HepG2 (cell line): ENCODE measurements at regions of chr7 and their contacts with region 1.

Region 1: DNA sequence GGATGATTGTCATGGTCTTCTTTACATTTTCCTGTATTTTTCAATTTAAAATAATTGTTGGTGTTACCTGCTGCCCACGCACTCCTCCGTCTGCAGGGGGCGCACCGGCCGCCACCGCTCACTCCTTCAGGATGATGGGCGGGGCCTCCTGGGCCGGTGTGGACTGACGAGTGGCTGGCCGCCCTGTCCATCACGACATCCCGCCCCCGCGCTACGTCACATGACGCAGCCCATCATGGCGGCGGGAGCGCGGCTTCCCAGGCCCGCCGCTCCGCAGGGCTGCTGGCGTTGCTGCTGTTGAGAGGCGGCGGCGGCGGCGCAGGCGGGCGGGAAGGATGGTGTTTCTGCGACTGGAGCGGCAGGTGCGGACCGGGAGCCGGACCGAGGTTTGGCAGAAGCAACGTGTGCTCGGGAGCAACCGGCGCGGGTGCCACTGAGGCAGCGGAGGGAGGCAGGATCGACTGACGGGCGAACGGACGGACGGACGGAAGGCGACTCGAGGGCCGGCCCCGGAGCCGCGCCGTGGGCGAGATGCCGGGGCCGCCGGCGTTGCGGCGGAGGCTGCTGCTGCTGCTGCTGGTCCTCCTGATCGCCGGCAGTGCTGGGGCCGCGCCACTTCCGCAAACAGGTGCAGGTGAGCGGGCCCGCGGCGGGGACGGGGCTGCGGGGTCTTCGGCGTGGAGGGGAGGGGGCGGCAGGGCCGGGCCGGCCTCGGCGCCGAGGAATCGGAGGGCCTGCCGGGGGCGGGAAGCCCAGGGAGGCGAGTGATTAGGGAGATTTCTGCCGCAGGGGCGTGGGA is at the start of gene LMTK2:
- DNase-seq: peak; percentile 81
- ATAC-seq: peak; percentile 92
- H3K4me3 ChIP-seq: peak within 1 kb of the TSS; percentile 91 to 98 (median 96)
- H3K27ac ChIP-seq: peak within 1 kb of the TSS; percentile 71
- H3K4me1 ChIP-seq: peaks cover 62% of the 10 kb centered on the region
- H3K27me3 ChIP-seq: no peaks in the 10 kb centered on the region; a peak in 1 of 5 replicates
- CTCF ChIP-seq: peak; percentile 94
- EP300 ChIP-seq: no peak
- POLR2A ChIP-seq: peak; percentile 71 to 84
- RAD21 ChIP-seq: peak; percentile 81
- total RNA-seq, gene LMTK2: 8.1 and 9.5 TPM in 2 replicates

Region 2: DNA sequence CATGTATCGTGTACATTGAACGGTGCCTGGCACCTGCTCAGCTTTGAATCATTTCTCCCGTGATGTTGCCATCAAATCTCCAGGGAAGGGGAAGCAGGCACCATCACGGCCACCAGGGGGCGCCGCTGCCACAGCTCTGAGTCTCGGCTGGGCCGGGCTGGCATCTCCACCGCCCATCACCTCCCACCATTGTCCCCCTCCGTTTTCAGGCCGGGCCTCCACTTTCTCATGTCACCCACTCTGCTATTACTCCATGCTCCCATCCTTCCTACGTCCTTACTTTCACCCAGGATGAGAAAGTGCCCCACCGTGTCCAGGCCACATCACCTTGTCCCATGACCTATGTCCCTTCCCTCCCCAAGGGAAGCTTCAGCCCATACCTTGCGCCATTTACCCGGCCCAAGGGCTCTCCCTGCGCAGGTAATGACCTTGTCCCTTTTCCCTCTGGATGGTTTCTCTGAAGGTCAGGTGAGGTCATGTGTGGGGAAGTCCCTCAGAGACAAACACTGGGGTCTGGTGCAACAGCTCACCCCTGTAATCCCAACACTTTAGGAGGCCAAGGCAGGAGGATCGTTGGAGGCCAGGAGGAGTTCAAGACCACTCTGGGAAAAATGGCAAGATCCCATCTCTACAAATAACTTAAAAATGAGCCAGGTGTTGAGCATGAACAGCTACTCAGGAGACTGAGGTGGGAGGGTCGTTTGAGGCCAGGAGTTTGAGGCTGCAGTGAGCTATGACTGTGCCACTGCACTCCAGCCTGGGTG is 85.1 kb before region 1 on chr7:
- CTCF ChIA-PET with region 1: no interaction called
- POLR2A ChIA-PET with region 1: no interaction called
- in situ Hi-C with region 1: no loop called
- intact Hi-C with region 1: loop called (anchors 2 kb)
- DNase-seq: peak; percentile 49
- ATAC-seq: peak; percentile 91
- H3K4me3 ChIP-seq: no peak overlapping the region
- H3K27ac ChIP-seq: no peak overlapping the region
- H3K4me1 ChIP-seq: 0 out of 2 replicates have a peak, but pooled peaks cover 5% of the 10 kb centered on the region
- H3K27me3 ChIP-seq: peaks cover 2% of the 10 kb centered on the region in 2 experiments; a peak in 1 of 5 replicates
- CTCF ChIP-seq: peak; percentile 92
- EP300 ChIP-seq: no peak
- POLR2A ChIP-seq: no peak
- RAD21 ChIP-seq: peak; percentile 91

Region 3: DNA sequence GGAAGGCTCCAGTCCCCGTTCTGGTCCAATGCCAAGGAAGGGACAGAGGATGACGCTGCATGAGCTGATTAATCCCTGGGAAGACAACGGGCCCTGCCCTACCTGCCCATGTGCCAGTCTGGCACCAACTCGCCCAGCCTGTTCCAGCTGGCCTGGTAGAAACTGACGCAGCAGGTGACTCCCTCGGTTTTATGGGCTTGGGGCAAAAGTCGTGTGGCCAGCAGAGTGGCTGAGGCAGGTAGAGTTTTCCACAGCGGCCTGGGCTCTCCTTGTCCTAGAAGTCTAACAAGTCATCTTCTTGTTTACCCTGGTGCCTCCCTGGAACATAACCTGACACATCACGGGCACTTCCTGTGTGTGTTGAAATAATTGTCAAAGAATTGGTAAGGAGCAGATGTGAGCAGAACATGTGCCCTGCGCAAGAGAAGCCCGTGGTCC is 20.5 kb before region 1 on chr7:
- CTCF ChIA-PET with region 1: no interaction called
- POLR2A ChIA-PET with region 1: interaction called, 3 read pairs
- in situ Hi-C with region 1: no loop called
- intact Hi-C with region 1: loop called (anchors 2 kb)
- DNase-seq: no peak
- ATAC-seq: peak; percentile 44; the same call in 2 of the 3 replicates
- H3K4me3 ChIP-seq: no peak overlapping the region
- H3K27ac ChIP-seq: no peak overlapping the region
- H3K4me1 ChIP-seq: peaks cover 14% of the 10 kb centered on the region
- H3K27me3 ChIP-seq: no peaks in the 10 kb centered on the region; a peak in 1 of 5 replicates
- CTCF ChIP-seq: no peak
- EP300 ChIP-seq: no peak
- POLR2A ChIP-seq: no peak
- RAD21 ChIP-seq: no peak

Region 4: DNA sequence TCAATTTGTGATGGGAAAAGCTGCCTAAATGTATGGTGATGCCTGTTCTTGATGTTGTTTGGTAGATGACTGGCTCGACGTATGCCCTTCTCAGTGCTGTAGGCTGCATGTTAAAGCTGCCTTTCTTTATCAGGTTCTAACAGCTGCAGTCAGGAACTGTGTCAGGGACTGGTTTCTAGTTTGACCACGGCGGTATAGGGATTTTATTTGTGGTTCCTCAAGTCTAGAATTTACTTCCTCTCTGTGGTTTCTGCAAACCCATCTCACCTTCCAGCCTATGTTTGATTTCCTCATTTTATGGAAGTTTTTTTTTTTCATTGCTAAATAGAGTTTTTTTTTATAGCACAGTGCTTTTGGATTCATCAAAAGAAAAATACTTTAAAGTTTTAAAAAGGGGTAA is 26.3 kb after region 1 on chr7:
- CTCF ChIA-PET with region 1: no interaction called
- POLR2A ChIA-PET with region 1: interaction called, 41 read pairs
- in situ Hi-C with region 1: no loop called
- intact Hi-C with region 1: loop called (anchors 1 kb)
- DNase-seq: no peak
- ATAC-seq: no peak
- H3K4me3 ChIP-seq: peak overlapping the region in 2 of 3 experiments; percentile 53 to 65; a peak in 3 of 6 replicates
- H3K27ac ChIP-seq: peak overlapping the region; percentile 91
- H3K4me1 ChIP-seq: peaks cover 90% of the 10 kb centered on the region
- H3K27me3 ChIP-seq: no peaks in the 10 kb centered on the region
- CTCF ChIP-seq: no peak
- EP300 ChIP-seq: no peak
- POLR2A ChIP-seq: no peak
- RAD21 ChIP-seq: no peak

Region 5: DNA sequence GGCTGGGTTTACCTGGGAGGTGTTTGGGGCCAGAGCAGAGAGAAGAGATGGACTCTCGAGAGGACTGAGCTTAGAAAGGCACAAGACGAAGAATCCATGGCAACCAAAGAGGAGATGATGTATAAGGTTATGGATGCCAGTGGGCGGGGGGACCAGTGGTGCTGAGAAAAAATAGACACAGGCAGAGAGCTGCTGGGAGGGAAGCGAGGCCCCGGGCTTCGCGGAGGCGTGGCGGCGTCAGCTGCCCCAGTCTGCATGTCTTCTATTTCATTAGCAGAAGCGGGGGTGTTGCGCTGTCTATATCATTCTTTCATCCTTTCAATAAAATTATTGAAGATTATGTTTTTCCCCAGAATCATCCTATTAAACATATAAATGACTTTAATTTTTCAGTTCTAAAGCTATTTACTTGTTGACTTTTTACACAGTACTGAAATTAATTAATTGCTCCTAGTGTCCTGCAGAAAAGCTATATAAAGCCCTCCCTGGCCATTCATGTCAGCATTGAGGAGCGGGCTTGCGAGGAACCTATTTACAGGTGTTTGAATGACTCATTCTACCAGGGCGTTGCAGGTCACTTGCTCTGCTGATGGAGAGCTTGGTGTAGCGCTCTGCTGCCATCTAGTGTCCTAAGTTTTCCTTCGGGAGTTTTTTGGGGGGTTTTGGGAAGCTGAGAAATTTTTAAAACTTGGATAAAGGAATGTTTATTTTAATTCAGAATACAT is 61.5 kb after region 1 on chr7:
- CTCF ChIA-PET with region 1: interaction called, 18 read pairs
- POLR2A ChIA-PET with region 1: no interaction called
- in situ Hi-C with region 1: loop called (anchors 10 kb)
- intact Hi-C with region 1: loop called (anchors 1 kb)
- DNase-seq: peak; percentile 66
- ATAC-seq: peak; percentile 70
- H3K4me3 ChIP-seq: no peak overlapping the region
- H3K27ac ChIP-seq: no peak overlapping the region
- H3K4me1 ChIP-seq: no peaks in the 10 kb centered on the region
- H3K27me3 ChIP-seq: no peaks in the 10 kb centered on the region
- CTCF ChIP-seq: peak; percentile 72
- EP300 ChIP-seq: no peak
- POLR2A ChIP-seq: no peak
- RAD21 ChIP-seq: peak; percentile 73